Heart right ventricle (tissue), 16 donors: ENCODE measurements at regions of chr11 and their contacts with region 1.

Region 1: GRCh38 chr11:43579171-43579918 is 101.2 kb upstream of the HSD17B12 start:
- DNase-seq: no peak
- ATAC-seq: peak in 2 of 8 donors; percentile 6 to 28
- H3K4me3 ChIP-seq: peak overlapping the region; percentile 35 to 74 (median 57)
- H3K27ac ChIP-seq: no peak overlapping the region
- H3K4me1 ChIP-seq: peaks cover 10 to 83% (median 58%) of the 10 kb centered on the region in 9 donors
- H3K27me3 ChIP-seq: peaks cover 23 to 100% (median 98%) of the 10 kb centered on the region in 7 donors
- CTCF ChIP-seq: peak in 7 of 9 donors; percentile 14 to 44 (median 29)

Region 2: DNA sequence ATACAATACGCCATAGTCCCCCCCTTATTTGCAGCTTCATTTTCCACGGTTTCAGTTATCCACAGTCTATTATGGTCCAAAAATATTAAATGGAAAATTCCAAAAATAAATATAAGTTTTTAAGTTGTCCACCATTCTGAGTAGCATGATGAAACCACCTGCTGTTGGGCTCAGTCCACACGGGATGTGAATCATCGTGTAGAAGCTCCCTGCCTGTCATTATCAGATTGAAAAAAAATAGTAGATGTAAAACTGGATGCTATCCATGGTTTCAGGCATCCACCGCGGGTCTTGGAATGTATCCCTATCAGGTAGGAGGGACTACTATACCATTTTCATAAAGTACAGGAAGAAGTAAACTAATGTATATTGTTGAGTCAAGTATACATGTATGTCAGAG is 93.2 kb before region 1 on chr11:
- intact Hi-C with region 1: no loop called
- DNase-seq: no peak
- ATAC-seq: no peak
- H3K4me3 ChIP-seq: no peak overlapping the region
- H3K27ac ChIP-seq: no peak overlapping the region
- H3K4me1 ChIP-seq: no peaks in the 10 kb centered on the region
- H3K27me3 ChIP-seq: no peaks in the 10 kb centered on the region
- CTCF ChIP-seq: no peak

Region 3: DNA sequence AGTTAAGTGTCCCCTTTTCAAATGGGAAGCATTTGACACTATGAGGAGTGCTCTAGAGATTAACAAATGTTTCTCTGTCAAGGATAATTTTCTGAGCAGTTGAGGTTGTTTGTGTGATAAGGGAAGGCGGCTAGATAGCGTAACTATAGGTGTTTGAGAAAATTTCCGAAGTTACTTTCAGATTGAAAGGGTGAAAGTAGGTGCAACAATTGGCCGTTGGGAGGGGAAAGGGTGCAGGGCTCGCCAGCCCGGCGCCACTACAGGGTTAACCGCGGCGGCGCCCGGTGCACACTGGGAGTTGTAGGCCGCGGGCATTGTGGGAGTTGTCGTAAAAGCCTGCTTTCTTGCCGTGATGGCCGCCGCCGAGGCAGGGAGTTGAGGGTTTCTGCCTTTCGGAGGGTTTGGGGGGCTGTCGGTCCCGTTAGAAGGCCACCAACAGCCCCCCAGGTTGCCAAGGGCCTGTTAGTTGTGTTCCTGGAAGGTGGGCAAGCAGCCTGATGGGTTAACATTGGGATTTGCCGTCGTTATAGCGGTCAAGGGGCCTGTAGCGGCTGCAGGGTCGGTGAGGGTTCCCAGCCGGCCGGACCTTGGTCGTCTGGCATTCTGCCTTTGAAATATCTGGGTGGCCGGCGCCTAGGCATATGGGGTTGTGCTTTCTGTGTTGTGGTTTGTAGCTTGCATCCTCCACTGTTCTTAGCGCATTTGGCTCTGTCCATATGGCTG is 64.7 kb after region 1 on chr11:
- intact Hi-C with region 1: loop called in 1 of 10 experiments (anchors 10 kb)
- DNase-seq: peak; percentile 85 to 87
- ATAC-seq: peak; percentile 99 to 100 (median 100)
- H3K4me3 ChIP-seq: peak overlapping the region; percentile 65 to 95 (median 88)
- H3K27ac ChIP-seq: peak overlapping the region in 9 of 10 donors; percentile 69 to 92 (median 82)
- H3K4me1 ChIP-seq: peaks cover 3 to 18% (median 15%) of the 10 kb centered on the region in 9 donors
- H3K27me3 ChIP-seq: peaks cover 5 to 40% (median 30%) of the 10 kb centered on the region in 7 donors
- CTCF ChIP-seq: peak in 2 of 9 donors; percentile 9 to 21

Region 4: DNA sequence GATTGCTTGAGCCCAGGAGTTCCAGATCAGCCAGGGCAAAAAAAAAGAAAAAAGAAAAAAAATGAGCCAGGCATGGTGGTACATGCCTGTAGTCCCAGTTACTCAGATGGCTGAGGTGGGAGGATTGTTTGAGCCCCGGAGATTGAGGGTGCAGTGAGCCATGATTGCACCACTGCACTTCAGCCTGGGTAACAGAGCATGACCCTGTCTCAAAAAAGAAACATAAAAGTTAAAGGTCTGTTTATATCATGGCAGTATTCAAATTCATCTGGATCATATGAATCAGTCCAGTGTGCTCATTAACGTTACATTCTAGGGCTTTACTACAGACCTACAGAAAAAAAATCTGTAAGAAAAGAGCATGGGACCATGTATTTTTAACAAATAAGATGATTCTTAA is 115.1 kb after region 1 on chr11:
- intact Hi-C with region 1: loop called in 1 of 10 experiments (anchors 10 kb)
- DNase-seq: no peak
- ATAC-seq: no peak
- H3K4me3 ChIP-seq: no peak overlapping the region
- H3K27ac ChIP-seq: no peak overlapping the region
- H3K4me1 ChIP-seq: peaks cover 0 to 56% (median 23%) of the 10 kb centered on the region in 9 donors
- H3K27me3 ChIP-seq: no peaks in the 10 kb centered on the region
- CTCF ChIP-seq: no peak

Region 5: GRCh38 chr11:43708776-43709175 is 129.4 kb after region 1 on chr11:
- intact Hi-C with region 1: loop called in 2 of 10 experiments (anchors 5 kb)
- DNase-seq: no peak
- ATAC-seq: no peak
- H3K4me3 ChIP-seq: no peak overlapping the region
- H3K27ac ChIP-seq: no peak overlapping the region
- H3K4me1 ChIP-seq: peaks cover 0 to 3% (median 0%) of the 10 kb centered on the region in 9 donors
- H3K27me3 ChIP-seq: no peaks in the 10 kb centered on the region
- CTCF ChIP-seq: peak in 8 of 9 donors; percentile 15 to 64 (median 50)

Region 6: GRCh38 chr11:43830928-43831440 is 251.6 kb after region 1 on chr11:
- intact Hi-C with region 1: loop called in 1 of 10 experiments (anchors 10 kb)
- DNase-seq: no peak
- ATAC-seq: peak in 5 of 8 donors; percentile 38 to 89 (median 75)
- H3K4me3 ChIP-seq: no peak overlapping the region
- H3K27ac ChIP-seq: peak overlapping the region in 1 of 10 donors; percentile 6
- H3K4me1 ChIP-seq: peaks cover 0 to 28% (median 6%) of the 10 kb centered on the region in 9 donors
- H3K27me3 ChIP-seq: no peaks in the 10 kb centered on the region
- CTCF ChIP-seq: no peak

Region 7: GRCh38 chr11:43845816-43846215 is 266.5 kb after region 1 on chr11:
- intact Hi-C with region 1: loop called in 3 of 10 experiments (anchors 5 to 10 kb)
- DNase-seq: no peak
- ATAC-seq: no peak
- H3K4me3 ChIP-seq: no peak overlapping the region
- H3K27ac ChIP-seq: no peak overlapping the region
- H3K4me1 ChIP-seq: no peaks in the 10 kb centered on the region
- H3K27me3 ChIP-seq: no peaks in the 10 kb centered on the region
- CTCF ChIP-seq: no peak

Region 8: DNA sequence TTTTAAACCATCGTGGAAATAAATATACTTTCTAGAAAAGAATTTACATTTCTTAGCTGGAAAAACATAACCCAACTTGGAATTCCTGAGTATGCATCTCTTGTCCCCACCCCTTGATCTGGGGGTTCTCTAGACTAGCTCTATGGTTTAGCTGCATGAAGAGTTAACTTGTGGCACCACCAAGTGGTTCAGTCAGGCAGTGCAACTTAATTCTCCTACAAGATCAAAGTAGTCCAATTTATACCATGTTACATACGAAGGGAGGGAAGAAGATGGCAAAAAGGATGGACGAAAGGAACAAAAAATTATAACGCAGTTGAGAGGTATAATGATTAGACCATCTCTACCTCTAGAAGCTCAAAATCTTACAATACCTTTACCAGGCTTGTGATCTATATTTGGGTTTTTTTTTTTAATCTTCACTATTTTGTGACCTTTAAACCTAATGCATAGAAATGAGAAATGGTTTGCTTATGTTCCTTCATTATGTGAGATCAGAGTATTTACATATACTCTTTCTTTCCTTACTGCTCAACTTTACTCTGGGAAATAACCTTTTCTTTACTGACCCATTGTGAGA is 272.8 kb after region 1 on chr11:
- intact Hi-C with region 1: loop called in 3 of 10 experiments (anchors 5 to 10 kb)
- DNase-seq: peak in 1 of 2 donors; percentile 46
- ATAC-seq: peak in 3 of 8 donors; percentile 38 to 74 (median 59)
- H3K4me3 ChIP-seq: no peak overlapping the region
- H3K27ac ChIP-seq: no peak overlapping the region
- H3K4me1 ChIP-seq: no peaks in the 10 kb centered on the region
- H3K27me3 ChIP-seq: no peaks in the 10 kb centered on the region
- CTCF ChIP-seq: peak; percentile 60 to 83 (median 78)